ENCODE measurements at regions of chr15 and their contacts with region 1.

Region 1: DNA sequence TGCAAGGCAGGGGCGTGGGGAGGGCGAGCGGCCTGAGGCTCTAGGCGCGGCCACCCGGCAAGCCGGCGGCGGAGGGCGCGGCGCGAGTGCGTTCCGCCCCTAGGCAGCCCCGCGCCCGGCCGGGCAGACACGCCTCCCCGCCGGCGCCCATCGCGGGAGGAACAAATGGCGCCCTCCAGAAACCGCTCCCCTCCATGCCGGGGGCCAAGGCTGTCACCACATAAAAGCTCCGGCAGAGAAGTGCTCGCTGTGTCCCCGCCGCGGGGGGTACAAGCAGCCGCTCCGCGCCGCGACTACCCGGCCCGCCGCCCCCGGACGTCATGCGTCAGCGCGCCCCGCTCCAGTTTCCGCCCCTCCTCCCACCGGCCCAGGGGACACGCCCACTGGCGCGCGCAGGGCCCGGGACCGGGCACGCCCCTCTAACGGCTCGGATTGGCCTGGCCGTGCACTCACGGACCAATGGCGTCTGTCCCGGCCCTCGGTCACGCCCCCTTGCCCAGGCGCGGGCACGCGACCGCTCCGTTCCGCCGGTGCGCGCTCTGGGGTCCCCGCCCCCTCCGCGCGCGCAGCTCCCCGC is 391 bp upstream of the KLF13 start:
- DNase-seq: peak; percentile 94
- ATAC-seq: peak; percentile 89 to 91

Region 2: DNA sequence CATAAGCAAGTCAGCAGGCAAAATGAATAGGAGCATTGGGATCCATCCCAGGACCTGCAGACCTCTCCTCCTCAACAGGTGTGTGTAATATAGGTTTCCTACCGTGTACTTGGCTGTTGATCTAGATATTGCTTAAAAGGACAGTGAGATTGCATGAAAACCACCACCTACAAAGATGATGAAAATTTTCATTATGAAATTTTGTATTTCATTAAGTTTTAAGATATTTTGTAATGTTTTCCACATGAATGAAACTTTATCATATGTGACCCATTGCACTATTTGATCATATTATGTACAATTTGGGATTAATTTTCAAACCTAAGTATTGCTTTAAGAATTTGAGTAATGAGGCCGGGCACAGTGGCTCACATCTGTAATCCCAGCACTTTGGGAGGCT is 130.4 kb before region 1 on chr15:
- intact Hi-C with region 1: no loop called
- DNase-seq: no peak
- ATAC-seq: no peak

Region 3: DNA sequence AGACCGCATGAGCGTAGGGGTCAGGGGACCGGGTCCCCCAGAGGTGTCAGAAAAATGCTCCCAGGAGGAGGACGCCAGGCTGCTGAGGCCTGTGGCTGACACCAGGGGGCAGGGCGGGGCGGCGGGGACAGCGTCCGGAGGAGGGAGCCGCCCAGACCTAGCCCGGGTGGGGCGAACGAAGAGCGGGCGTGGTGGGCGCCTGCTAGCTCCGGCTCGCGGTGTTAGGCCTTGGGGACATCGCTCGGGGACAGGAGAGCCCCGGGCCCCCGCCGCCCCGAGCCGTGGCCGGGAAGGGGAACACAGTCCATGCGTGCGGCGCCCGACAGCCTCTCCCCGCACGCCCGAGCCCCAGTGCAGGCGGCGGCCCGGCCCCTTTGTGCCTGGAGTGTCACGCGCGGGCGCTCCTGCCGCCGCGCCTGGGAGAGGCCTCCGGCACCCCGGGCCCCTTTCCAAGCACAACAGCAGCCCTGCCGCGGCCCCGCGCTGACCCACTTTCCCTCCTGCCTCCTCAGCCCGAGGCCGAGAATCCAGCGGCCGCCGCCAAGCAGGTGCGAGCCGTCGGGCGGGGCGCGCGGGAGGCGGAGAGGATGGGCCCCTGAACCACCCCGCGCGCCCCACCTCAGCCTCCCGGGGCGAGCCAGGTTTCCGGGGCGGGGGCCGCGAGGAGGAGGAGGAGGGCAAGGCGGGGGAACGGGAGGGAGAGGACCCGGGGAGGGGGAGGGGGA is 110.6 kb before region 1 on chr15:
- intact Hi-C with region 1: loop called in 1 of 2 experiments (anchors 10 kb)
- DNase-seq: peak; percentile 79
- ATAC-seq: peak; percentile 84 to 85

Region 4: DNA sequence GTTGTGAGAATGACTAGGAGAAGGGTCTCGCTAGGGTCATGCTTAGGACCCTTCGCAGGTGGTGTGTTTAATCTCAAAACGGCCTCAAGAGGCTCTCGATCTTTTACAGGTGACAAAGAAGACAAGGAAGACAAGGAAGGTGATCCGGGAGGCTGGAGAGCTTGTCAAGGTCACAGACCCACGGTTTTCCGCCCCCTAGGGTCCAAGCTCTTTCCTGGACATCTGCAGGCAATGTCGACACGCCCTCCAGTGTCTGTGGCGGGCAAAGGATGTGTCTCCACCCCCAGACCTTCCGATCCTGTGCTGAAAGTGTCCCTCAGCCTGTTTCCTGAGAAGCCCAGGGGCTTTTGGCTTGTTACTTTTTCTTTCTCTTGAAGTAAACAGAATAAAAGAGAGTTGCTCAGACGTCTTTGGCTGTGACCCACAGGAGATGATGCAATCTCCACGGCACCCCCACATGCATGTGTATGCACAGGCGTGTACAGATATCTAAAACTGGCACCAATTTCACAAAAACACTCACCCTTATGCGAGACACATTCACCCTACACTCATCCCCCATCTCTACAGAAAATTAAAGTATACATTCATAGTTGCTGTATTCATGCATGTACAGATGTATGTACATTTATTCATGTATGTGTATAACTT is 109.1 kb after region 1 on chr15:
- intact Hi-C with region 1: loop called in 1 of 2 experiments (anchors 10 kb)
- DNase-seq: peak; percentile 68
- ATAC-seq: peak; percentile 81 to 89